ENCODE measurements at regions of chr13 and their contacts with region 1.

Region 1: DNA sequence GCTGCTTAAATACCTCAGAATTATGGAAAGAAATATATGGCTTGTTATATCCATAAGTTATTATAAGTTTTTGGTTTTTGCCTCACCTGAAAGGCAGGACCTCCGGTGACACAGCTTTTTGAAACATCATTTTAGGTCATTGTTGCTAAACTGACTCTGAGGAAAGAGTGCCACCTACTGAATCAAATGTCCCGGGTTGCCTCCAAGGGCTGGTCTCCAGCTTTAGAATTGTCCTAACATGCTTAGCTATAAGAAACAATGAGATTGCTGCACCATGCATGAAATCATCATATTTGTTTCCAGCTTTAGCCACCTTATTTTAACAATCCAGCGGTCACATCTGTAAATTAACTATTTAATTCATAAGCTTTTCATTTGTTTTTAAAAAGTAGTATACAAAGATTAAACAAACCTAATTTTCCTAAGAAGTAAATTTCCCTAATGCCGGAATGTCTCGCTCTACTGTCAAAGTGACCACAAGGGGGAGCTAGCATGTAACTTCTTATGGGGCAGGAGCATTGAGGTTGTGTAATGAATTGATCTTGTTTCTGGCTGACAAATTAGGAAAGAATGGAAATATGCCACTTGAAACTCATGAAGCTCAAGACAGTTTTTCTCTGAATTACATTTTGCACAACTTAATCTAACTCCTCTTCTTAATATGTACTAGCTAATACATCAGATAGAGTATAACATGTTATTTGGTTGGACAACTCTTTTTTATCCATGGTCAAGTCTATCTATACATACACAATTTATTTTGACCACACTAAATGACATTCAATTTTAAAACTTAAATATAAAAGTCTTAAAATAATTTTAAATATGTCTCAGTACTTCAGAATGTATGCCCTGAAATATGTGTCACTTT is 6.7 kb upstream of the PCDH17 start:
- DNase-seq: peak; percentile 49
- ATAC-seq: peak; percentile 91
- H3K4me3 Mint-ChIP-seq: peak overlapping the region; percentile 45
- H3K27ac Mint-ChIP-seq: no peak overlapping the region
- H3K4me1 Mint-ChIP-seq: peaks cover 22% of the 10 kb centered on the region
- H3K27me3 Mint-ChIP-seq: peaks cover 27% of the 10 kb centered on the region
- CTCF ChIP-seq: peak; percentile 87

Region 2: DNA sequence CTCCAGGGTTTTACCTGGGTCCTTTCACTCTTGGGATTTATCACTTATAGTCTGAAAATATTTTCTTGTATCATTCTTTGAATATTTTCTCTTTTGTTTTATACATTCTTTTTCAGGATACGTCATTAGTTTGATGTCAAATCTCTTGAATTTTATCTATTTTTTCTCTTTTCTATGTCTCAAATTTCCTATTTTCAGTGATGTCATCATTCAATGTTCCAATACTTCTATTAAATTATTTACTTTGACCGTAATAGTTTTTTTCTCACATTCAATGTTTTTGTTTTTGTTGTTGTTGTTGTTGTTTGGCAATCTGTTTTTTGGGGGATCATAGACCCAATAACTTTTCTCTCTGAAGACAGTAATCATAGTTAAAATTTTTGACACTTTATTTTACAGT is 374.3 kb before region 1 on chr13:
- CTCF ChIA-PET with region 1: no interaction called
- POLR2A ChIA-PET with region 1: no interaction called
- DNase-seq: no peak
- ATAC-seq: no peak
- H3K4me3 Mint-ChIP-seq: no peak overlapping the region
- H3K27ac Mint-ChIP-seq: no peak overlapping the region
- H3K4me1 Mint-ChIP-seq: no peaks in the 10 kb centered on the region
- H3K27me3 Mint-ChIP-seq: no peaks in the 10 kb centered on the region
- CTCF ChIP-seq: no peak

Region 3: GRCh38 chr13:57311009-57311586 is 313.7 kb before region 1 on chr13:
- CTCF ChIA-PET with region 1: interaction called, 13 read pairs
- POLR2A ChIA-PET with region 1: no interaction called
- DNase-seq: peak; percentile 26
- ATAC-seq: peak; percentile 94
- H3K4me3 Mint-ChIP-seq: peak overlapping the region; percentile 57
- H3K27ac Mint-ChIP-seq: no peak overlapping the region
- H3K4me1 Mint-ChIP-seq: peaks cover 12% of the 10 kb centered on the region
- H3K27me3 Mint-ChIP-seq: no peaks in the 10 kb centered on the region
- CTCF ChIP-seq: no peak

Region 4: GRCh38 chr13:57582032-57582431 is 42.8 kb before region 1 on chr13:
- CTCF ChIA-PET with region 1: interaction called, 94 read pairs
- POLR2A ChIA-PET with region 1: no interaction called
- DNase-seq: peak; percentile 26
- ATAC-seq: peak; percentile 95
- H3K4me3 Mint-ChIP-seq: no peak overlapping the region
- H3K27ac Mint-ChIP-seq: no peak overlapping the region
- H3K4me1 Mint-ChIP-seq: peaks cover 14% of the 10 kb centered on the region
- H3K27me3 Mint-ChIP-seq: no peaks in the 10 kb centered on the region
- CTCF ChIP-seq: peak; percentile 10; the same call in 1 of the 2 replicates

Region 5: GRCh38 chr13:57595775-57596174 is 29.0 kb before region 1 on chr13:
- CTCF ChIA-PET with region 1: interaction called, 27 read pairs
- POLR2A ChIA-PET with region 1: no interaction called
- DNase-seq: no peak
- ATAC-seq: no peak
- H3K4me3 Mint-ChIP-seq: no peak overlapping the region
- H3K27ac Mint-ChIP-seq: no peak overlapping the region
- H3K4me1 Mint-ChIP-seq: no peaks in the 10 kb centered on the region
- H3K27me3 Mint-ChIP-seq: no peaks in the 10 kb centered on the region
- CTCF ChIP-seq: no peak

Region 6: GRCh38 chr13:57611969-57612368 is 12.8 kb before region 1 on chr13:
- CTCF ChIA-PET with region 1: interaction called, 28 read pairs
- POLR2A ChIA-PET with region 1: no interaction called
- DNase-seq: no peak
- ATAC-seq: no peak
- H3K4me3 Mint-ChIP-seq: no peak overlapping the region
- H3K27ac Mint-ChIP-seq: no peak overlapping the region
- H3K4me1 Mint-ChIP-seq: peaks cover 8% of the 10 kb centered on the region
- H3K27me3 Mint-ChIP-seq: no peaks in the 10 kb centered on the region
- CTCF ChIP-seq: no peak

Region 7: DNA sequence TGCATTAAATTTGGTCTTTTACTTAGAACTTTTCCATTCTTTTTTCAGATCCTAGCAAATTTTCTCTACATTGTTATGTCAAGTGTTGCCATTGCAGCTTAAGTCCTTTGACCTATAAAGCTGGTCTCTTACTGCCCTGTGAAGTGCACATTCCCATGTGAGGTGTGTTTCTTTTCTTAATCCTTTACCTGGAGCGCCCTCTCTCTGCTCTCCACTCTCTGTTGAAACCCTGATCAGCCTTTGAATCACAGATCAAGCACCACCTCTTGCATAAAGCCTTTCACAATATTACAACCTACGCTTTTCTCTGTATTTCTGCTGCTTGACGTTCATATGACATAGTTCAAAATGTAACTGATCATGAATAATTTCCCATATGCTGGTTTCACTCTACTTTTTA is 91.5 kb after region 1 on chr13:
- CTCF ChIA-PET with region 1: interaction called, 47 read pairs
- POLR2A ChIA-PET with region 1: no interaction called
- DNase-seq: peak; percentile 32
- ATAC-seq: peak; percentile 99
- H3K4me3 Mint-ChIP-seq: no peak overlapping the region
- H3K27ac Mint-ChIP-seq: no peak overlapping the region
- H3K4me1 Mint-ChIP-seq: peaks cover 16% of the 10 kb centered on the region
- H3K27me3 Mint-ChIP-seq: peaks cover 5% of the 10 kb centered on the region; the same call in 1 of the 2 replicates
- CTCF ChIP-seq: no peak